Calu3 (cell line): ENCODE measurements at regions of chr9 and their contacts with region 1.

Region 1: DNA sequence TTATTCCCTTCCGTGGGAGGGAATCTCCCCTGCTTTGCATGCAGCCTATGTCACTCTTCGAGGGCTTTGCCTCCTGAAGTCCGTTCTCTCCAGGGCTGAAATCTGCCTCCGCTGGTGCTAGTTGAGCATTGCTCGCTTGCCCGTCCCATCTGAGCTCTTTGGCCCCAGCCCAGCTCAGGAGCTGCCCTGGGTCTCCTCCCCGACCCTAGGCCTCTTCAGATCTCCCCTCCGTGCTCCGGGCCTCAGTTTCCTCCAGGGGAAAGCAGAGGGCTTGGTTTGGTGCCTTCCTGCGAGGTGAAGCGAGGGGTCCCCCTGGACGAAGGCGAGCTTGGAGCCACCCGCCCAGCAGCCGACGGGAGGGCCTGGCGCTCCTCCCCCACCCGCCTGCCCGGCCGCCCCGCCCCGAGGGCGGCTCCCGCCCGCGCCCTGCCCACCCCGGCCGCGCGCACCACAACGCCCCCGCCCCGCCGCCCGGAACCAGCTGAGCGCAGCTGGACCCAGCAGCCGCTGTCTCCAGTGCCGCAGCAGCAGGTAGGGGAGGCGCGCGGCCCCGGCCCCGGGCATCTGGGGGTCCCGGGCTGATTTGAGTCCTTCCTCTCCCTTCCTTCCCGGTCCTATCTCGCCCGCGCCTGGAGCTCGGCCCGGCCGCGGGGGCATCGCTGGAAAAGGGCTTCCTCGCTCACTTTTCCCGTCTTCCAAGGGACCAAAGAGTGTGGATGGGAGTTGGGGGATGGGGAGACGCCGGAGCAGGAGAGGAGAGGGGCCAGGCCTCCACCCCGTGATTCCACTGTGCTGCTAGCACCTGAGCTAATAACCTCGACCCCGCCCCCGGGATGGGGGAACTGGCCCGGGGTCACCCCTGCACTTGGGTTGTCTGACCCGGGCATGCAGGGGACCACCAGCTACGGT is at the start of gene GSN:
- DNase-seq: peak; percentile 69
- H3K4me3 Mint-ChIP-seq: peak within 1 kb of the TSS; percentile 81
- H3K27ac Mint-ChIP-seq: peak within 1 kb of the TSS; percentile 61
- H3K4me1 Mint-ChIP-seq: peaks cover 15% of the 10 kb centered on the region
- H3K27me3 Mint-ChIP-seq: no peaks in the 10 kb centered on the region
- CTCF ChIP-seq: no peak
- total RNA-seq, gene GSN: 68.3 and 71.6 TPM in 2 replicates

Region 2: GRCh38 chr9:121278535-121279261 is 10.8 kb after region 1 on chr9:
- CTCF ChIA-PET with region 1: interaction called, 13 read pairs
- intact Hi-C with region 1: no loop called
- DNase-seq: peak; percentile 52
- H3K4me3 Mint-ChIP-seq: no peak overlapping the region
- H3K27ac Mint-ChIP-seq: peak overlapping the region; percentile 16
- H3K4me1 Mint-ChIP-seq: peaks cover 73% of the 10 kb centered on the region
- H3K27me3 Mint-ChIP-seq: no peaks in the 10 kb centered on the region
- CTCF ChIP-seq: peak; percentile 80

Region 3: DNA sequence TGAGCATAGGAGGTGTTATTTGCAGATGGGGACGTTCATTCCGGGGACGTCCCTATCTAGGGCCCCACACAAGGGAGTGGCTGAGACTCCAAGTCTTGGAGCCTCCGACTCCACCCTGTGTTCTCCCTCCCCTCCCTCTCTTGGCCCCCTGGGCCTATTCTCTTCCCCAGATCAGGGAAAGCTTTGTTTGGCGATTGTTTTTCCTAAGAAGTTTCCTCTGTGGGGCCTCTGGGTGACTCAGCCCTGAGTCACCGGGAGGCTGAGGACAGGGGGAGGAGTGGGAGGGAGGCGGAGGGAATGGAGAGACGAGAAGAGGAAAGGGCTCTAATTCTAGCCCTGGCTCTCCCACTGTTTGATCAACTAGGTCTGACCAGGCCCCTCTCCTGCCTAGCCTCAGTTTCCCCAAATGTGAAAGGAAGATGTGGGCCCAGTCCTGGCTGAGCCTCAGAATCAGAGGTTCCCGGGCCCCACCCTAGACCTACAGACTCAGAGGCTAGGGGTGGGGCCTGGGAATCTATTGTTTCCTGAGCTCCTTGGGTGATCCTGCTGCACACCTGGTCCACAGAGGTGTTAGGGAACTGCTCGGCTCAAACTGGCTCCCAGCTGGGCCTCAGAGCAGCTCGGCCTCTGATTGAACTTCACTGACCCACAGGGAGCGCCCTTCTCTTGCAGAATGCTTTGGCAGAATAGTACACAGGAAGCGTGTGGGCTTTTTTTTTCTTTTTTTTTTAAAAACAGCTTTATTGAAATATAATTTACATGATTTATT is 19.2 kb after region 1 on chr9:
- CTCF ChIA-PET with region 1: interaction called, 10 read pairs
- intact Hi-C with region 1: no loop called
- DNase-seq: peak; percentile 79
- H3K4me3 Mint-ChIP-seq: peak overlapping the region; percentile 52
- H3K27ac Mint-ChIP-seq: peak overlapping the region; percentile 99
- H3K4me1 Mint-ChIP-seq: peaks cover 62% of the 10 kb centered on the region
- H3K27me3 Mint-ChIP-seq: no peaks in the 10 kb centered on the region
- CTCF ChIP-seq: no peak